Panc1 (cell line): ENCODE measurements at regions of chr3 and their contacts with region 1.

Region 1: DNA sequence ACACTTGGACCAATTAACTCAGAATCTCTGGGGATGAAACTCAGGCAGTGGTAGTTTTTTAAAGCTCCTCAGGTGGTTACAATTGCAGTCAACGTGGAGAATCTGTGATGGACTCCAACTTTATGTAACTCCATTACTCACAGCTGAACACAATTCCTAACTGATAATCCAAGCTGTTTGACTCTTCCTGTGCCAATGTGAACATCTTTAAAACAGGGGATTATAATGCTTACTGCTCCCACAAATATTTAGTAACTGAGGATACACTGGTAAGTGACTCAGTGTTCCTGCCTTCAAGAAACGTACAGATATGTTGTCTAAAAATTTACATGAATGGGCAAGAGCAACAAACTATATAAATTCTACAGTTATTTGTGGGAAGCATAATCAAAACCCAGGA is 85.6 kb downstream of the OSBPL10 start:
- DNase-seq: no peak
- ATAC-seq: no peak
- H3K4me3 ChIP-seq: no peak overlapping the region
- H3K27ac ChIP-seq: no peak overlapping the region
- H3K4me1 ChIP-seq: peaks cover 11% of the 10 kb centered on the region
- H3K27me3 ChIP-seq: no peaks in the 10 kb centered on the region
- CTCF ChIP-seq: no peak

Region 2: DNA sequence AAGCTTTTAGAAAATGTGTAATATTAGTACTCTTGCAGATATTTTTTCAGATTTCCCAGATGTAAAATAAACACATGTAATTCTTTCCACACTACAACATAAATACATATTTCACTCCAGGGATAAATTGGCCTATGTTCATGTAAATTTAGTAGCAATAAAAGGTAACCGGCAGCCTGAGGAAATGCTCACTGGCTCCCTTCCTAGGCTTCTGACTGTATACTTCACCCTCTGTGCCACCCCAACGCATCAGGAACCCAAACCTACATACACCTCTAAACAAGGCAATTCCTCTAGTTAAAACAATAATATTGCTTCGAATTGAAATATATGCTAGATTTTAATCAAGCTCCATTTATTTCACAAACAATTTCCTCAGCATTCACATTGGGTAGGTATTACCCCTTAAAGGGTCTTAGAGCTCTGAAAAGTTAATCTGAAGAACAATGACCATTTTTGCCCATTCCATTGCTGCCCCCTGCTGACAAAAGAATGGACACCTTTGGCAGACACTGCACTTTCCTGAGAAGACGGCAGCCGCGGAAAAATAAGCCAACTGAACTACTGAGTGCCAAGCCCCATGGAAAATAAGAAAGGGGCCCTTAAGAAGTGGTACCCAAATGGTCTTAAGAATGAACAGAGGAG is 126.9 kb before region 1 on chr3:
- CTCF ChIA-PET with region 1: no interaction called
- POLR2A ChIA-PET with region 1: no interaction called
- in situ Hi-C with region 1: no loop called
- intact Hi-C with region 1: no loop called
- DNase-seq: peak; percentile 2
- ATAC-seq: peak; percentile 45; the same call in 1 of the 2 replicates
- H3K4me3 ChIP-seq: no peak overlapping the region
- H3K27ac ChIP-seq: no peak overlapping the region
- H3K4me1 ChIP-seq: no peaks in the 10 kb centered on the region
- H3K27me3 ChIP-seq: no peaks in the 10 kb centered on the region
- CTCF ChIP-seq: peak; percentile 57

Region 3: DNA sequence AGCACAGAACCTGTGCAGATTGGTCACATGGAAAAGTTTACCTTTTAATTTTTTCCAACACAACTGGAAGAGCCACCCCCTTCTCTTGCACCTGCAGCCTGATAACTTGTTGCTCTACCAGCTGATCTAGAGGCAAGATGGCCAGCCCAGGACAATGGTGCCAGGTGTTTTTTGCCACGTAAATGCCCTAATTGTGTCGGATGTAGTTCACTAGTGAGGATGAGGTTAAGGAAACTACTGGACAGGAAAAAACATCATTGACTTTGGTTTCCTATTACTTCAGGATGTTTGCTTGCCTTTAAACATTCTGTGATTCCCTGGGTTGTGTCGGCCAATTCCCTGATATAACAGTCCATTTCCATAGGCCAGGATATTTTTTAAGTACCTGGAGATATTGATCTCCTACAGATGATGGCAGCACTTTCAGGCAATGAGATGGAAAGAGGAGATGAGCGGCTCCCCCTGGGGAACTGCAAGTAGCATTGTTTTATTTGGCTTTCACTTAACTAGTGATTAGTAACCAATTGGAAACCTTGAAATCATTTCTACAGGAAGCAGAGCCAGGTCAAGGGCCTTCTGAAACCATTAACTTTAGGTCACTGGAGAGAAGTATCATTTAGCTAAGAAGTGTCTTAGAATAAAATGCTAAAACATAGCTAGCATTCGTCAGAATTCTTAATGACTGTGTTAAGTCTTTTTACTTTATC is 13.1 kb after region 1 on chr3:
- CTCF ChIA-PET with region 1: no interaction called
- POLR2A ChIA-PET with region 1: no interaction called
- in situ Hi-C with region 1: no loop called
- intact Hi-C with region 1: no loop called
- DNase-seq: no peak
- ATAC-seq: no peak
- H3K4me3 ChIP-seq: no peak overlapping the region
- H3K27ac ChIP-seq: no peak overlapping the region
- H3K4me1 ChIP-seq: peaks cover 30% of the 10 kb centered on the region
- H3K27me3 ChIP-seq: no peaks in the 10 kb centered on the region
- CTCF ChIP-seq: peak; percentile 33

Region 4: DNA sequence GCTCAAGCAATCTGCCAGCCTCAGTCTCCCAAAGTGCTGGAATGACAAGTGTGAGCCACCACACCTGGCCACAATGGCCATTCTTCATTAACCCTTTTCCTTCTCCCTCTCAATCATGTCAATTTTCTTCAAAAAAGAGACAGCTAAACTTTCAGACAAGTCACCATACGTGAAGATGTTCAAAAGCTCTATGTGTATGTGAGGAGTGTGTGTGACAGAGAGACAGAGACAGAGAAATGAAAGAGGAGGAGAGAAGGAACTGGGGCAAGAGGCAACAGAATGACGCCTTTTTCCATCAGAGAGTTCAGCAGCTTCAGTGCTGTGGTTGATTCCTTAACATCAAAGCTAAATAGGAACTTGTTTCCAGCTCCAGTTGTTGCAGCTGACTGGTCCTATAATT is 58.2 kb after region 1 on chr3:
- CTCF ChIA-PET with region 1: no interaction called
- POLR2A ChIA-PET with region 1: interaction called, 10 read pairs
- in situ Hi-C with region 1: no loop called
- intact Hi-C with region 1: no loop called
- DNase-seq: no peak
- ATAC-seq: no peak
- H3K4me3 ChIP-seq: no peak overlapping the region
- H3K27ac ChIP-seq: no peak overlapping the region
- H3K4me1 ChIP-seq: peaks cover 10% of the 10 kb centered on the region
- H3K27me3 ChIP-seq: no peaks in the 10 kb centered on the region
- CTCF ChIP-seq: no peak

Region 5: DNA sequence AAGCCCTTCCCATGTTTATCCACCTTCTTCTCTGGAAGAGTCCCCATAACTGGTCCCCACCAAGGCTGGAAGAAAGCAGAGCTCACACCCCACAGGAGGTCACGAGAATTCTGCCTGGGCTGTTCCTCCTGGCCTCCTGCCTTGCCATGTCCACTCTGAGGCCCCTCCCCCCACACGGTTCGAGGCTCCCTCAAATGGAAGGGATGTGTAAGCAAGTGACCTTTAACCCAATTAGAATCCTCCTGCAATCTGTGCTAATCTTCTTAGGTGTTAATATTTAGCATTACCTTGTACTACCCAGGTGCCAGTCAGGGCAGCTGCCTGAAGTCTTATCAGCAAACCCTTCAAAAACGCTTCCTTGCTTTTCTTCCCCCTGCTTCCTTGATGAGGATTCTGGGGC is 707.6 kb after region 1 on chr3:
- CTCF ChIA-PET with region 1: no interaction called
- POLR2A ChIA-PET with region 1: no interaction called
- in situ Hi-C with region 1: no loop called
- intact Hi-C with region 1: no loop called
- DNase-seq: no peak
- ATAC-seq: no peak
- H3K4me3 ChIP-seq: no peak overlapping the region
- H3K27ac ChIP-seq: no peak overlapping the region
- H3K4me1 ChIP-seq: no peaks in the 10 kb centered on the region
- H3K27me3 ChIP-seq: no peaks in the 10 kb centered on the region
- CTCF ChIP-seq: no peak